H1 (cell line): ENCODE measurements at regions of chr1 and their contacts with region 1.

Region 1: GRCh38 chr1:193104906-193105820 is at the start of gene GLRX2:
- DNase-seq: peak in 1 of 2 experiments; percentile 86
- H3K4me3 ChIP-seq: peak within 1 kb of the TSS; percentile 67 to 82 (median 76)
- H3K27ac ChIP-seq: 0 out of 2 replicates have a peak within 1 kb of the TSS, but pooled peaks have one; percentile 42
- H3K4me1 ChIP-seq: peaks cover 0 to 5% (median 2%) of the 10 kb centered on the region in 4 experiments; a peak in 4 of 7 replicates
- H3K27me3 ChIP-seq: peaks cover 0 to 11% (median 4%) of the 10 kb centered on the region in 4 experiments; a peak in 4 of 7 replicates
- CTCF ChIP-seq: no peak
- EP300 ChIP-seq: no peak
- POLR2A ChIP-seq: peak; percentile 45 to 53; a peak in 1 of 3 replicates
- RAD21 ChIP-seq: peak; percentile 5 to 26; a peak in 2 of 4 replicates
- total RNA-seq, gene GLRX2: 13.5 and 14.2 TPM in 2 replicates

Region 2: DNA sequence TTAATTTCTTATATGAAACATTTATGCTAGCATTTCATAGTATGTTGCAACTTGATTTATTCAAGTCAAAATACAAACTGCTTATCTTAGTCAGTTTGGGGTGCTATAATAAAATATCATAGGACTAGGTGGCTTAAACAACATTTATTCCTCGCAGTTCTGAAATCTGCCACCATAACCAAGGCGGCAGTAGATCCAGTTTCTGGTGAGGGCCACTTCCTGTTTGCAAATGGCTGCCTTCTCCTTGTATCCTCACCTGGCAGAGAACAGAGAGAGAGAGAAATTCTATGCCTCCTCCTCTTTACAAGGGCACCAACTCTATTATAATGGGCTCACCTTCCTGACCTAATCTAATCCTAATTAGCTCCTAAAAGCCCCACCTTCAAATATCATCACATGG is 372.4 kb before region 1 on chr1:
- CTCF ChIA-PET with region 1: no interaction called
- POLR2A ChIA-PET with region 1: no interaction called
- DNase-seq: no peak
- H3K4me3 ChIP-seq: no peak overlapping the region
- H3K27ac ChIP-seq: no peak overlapping the region
- H3K4me1 ChIP-seq: no peaks in the 10 kb centered on the region
- H3K27me3 ChIP-seq: no peaks in the 10 kb centered on the region
- CTCF ChIP-seq: peak; percentile 12 to 45 (median 12); a peak in 2 of 4 replicates
- EP300 ChIP-seq: no peak
- POLR2A ChIP-seq: no peak
- RAD21 ChIP-seq: peak in 1 of 2 experiments; percentile 36; a peak in 1 of 4 replicates

Region 3: GRCh38 chr1:193094112-193094511 is 11.1 kb before region 1 on chr1:
- CTCF ChIA-PET with region 1: no interaction called
- POLR2A ChIA-PET with region 1: interaction called, 21 read pairs
- DNase-seq: no peak
- H3K4me3 ChIP-seq: no peak overlapping the region
- H3K27ac ChIP-seq: no peak overlapping the region
- H3K4me1 ChIP-seq: no peaks in the 10 kb centered on the region
- H3K27me3 ChIP-seq: no peaks in the 10 kb centered on the region
- CTCF ChIP-seq: no peak
- EP300 ChIP-seq: no peak
- POLR2A ChIP-seq: no peak
- RAD21 ChIP-seq: no peak